ENCODE measurements at regions of chr5 and their contacts with region 1.

Region 1: DNA sequence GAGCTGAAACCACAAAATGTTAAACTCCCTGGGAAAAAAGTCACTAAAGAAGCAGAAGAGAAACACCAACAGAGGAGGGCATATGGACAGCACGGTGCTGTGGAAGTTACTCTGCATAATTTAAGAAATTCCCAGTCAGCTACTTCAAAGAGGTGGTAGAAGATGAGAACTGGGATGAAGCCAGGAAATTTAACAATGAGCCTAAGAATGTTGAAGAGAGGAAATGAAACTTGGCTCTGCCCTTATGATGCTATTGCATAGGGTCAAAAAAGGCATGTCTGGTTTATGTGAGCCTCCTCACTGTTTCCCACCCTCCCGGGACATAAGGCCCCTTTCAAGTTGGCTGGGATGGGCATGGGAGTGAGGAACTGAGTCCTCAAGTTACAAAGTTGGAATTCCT is 25.4 kb upstream of the SNX18 start:
- DNase-seq: no peak
- H3K4me3 ChIP-seq: no peak overlapping the region
- H3K27ac ChIP-seq: no peak overlapping the region
- H3K27me3 ChIP-seq: peaks cover 8% of the 10 kb centered on the region
- CTCF ChIP-seq: no peak

Region 2: GRCh38 chr5:54243473-54244080 is 248.6 kb before region 1 on chr5:
- CTCF ChIA-PET with region 1: interaction called, 131 read pairs
- POLR2A ChIA-PET with region 1: no interaction called
- DNase-seq: peak; percentile 10
- H3K4me3 ChIP-seq: no peak overlapping the region
- H3K27ac ChIP-seq: no peak overlapping the region
- H3K27me3 ChIP-seq: no peaks in the 10 kb centered on the region
- CTCF ChIP-seq: peak; percentile 70

Region 3: GRCh38 chr5:54415896-54416601 is 76.1 kb before region 1 on chr5:
- CTCF ChIA-PET with region 1: interaction called, 24 read pairs
- POLR2A ChIA-PET with region 1: no interaction called
- DNase-seq: no peak
- H3K4me3 ChIP-seq: no peak overlapping the region
- H3K27ac ChIP-seq: no peak overlapping the region
- H3K27me3 ChIP-seq: peaks cover 15% of the 10 kb centered on the region
- CTCF ChIP-seq: no peak

Region 4: DNA sequence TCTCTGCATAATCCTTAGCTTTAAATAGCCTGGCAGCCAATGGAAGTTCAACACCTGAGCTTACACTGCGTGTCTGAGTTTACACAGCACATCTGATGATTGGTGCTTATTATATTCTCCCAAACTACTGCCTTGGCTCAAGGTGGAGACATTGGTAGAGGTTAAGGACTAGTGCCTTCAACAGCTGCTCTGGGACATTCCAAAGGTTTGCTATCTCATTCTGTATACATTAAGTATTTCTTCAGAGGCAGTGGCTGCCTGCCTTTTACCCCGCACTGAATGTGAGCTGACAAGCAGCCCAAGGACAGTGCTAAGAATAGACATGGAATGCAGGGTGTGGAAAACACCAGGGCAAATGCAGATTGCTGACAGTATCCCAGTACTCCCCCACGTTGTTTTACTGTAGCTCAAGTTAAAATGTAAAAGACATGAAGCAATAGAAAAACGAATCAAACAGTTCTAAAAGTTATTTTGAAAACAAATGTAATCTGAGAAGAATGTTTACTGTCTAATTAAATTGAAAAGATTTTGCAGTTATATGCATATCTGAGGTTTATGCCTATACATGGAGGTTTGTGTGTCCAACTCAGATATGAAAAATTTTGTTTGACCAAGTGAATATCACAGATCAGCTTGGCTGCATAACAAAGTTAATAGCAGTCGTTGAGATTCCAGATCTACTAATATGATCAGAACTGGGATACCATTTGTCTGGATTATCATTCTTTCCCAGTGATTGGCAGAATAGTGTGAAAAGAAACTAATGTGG is 34.9 kb before region 1 on chr5:
- CTCF ChIA-PET with region 1: interaction called, 27 read pairs
- POLR2A ChIA-PET with region 1: interaction called, 7 read pairs
- DNase-seq: peak; percentile 72
- H3K4me3 ChIP-seq: no peak overlapping the region
- H3K27ac ChIP-seq: peak overlapping the region; percentile 71
- H3K27me3 ChIP-seq: no peaks in the 10 kb centered on the region
- CTCF ChIP-seq: no peak

Region 5: GRCh38 chr5:54480296-54480695 is 11.9 kb before region 1 on chr5:
- CTCF ChIA-PET with region 1: interaction called, 15 read pairs
- POLR2A ChIA-PET with region 1: no interaction called
- DNase-seq: no peak
- H3K4me3 ChIP-seq: no peak overlapping the region
- H3K27ac ChIP-seq: no peak overlapping the region
- H3K27me3 ChIP-seq: peaks cover 15% of the 10 kb centered on the region
- CTCF ChIP-seq: no peak

Region 6: GRCh38 chr5:54553659-54554207 is 61.6 kb after region 1 on chr5:
- CTCF ChIA-PET with region 1: no interaction called
- POLR2A ChIA-PET with region 1: no interaction called
- DNase-seq: no peak
- H3K4me3 ChIP-seq: no peak overlapping the region
- H3K27ac ChIP-seq: no peak overlapping the region
- H3K27me3 ChIP-seq: no peaks in the 10 kb centered on the region
- CTCF ChIP-seq: no peak

Region 7: DNA sequence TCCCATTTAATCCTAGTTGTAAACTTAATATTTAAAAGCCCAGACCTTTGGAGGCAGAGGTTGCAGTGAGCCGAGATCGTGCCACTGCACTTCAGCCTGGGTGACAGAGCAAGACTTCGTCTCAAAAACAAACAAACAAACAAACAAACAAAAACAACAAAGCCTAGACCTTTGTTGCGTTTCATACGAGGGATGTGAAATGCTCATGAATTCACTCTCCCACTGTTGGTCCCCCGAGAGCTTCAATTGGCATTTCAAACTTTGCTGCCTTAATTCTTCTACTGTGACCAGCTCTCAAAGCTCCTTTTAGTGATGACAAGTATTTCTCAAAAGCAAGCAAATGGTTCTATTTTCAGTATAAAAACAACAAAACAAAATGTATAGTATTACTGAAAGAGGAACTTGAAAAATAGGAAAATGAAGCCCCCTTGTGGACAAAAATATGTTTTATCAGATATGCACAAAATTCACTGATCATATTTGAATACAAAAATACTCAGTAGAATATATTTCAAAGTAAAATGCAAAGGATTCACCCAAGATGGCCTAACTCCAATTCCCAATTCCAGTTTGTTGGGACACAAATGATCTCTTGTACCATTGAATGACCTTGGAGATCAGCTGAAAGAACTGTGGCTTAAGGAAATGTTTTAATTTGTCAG is 352.9 kb after region 1 on chr5:
- CTCF ChIA-PET with region 1: interaction called, 18 read pairs
- POLR2A ChIA-PET with region 1: no interaction called
- DNase-seq: peak; percentile 41
- H3K4me3 ChIP-seq: no peak overlapping the region
- H3K27ac ChIP-seq: no peak overlapping the region
- H3K27me3 ChIP-seq: no peaks in the 10 kb centered on the region
- CTCF ChIP-seq: peak; percentile 40

Region 8: DNA sequence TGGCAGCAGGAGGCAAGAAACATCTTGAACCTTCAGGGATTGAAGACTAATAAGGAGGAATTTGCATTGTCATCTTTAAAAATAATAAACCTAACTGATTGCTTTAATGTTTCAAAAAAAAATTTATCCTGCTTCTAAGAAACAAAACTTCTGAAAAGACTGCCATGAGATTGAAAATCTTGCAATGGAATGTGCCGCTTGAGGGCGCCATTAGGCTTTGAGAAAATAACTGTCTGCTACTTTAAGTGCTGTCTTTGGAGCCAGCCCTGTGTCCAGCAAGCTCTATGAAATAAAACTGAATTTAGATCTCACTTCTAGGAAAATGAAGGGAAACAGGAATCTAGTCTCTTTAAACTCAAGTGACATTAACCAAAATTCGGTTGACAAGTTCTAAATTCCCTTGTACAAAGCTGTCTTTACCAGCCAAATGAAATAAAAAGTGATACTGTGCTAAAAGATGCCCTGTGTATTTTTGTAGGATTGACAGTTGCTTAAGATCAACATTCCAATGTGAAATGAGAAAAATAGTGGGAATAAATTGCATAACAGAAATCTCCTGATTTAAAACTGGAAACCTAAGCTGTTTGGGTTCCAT is 413.9 kb after region 1 on chr5:
- CTCF ChIA-PET with region 1: interaction called, 16 read pairs
- POLR2A ChIA-PET with region 1: no interaction called
- DNase-seq: peak; percentile 59
- H3K4me3 ChIP-seq: no peak overlapping the region
- H3K27ac ChIP-seq: no peak overlapping the region
- H3K27me3 ChIP-seq: no peaks in the 10 kb centered on the region
- CTCF ChIP-seq: peak; percentile 79

Measured in AG04450 (cell line).